Heart left ventricle (tissue), 16 donors: ENCODE measurements at regions of chr1 and their contacts with region 1.

Region 1: DNA sequence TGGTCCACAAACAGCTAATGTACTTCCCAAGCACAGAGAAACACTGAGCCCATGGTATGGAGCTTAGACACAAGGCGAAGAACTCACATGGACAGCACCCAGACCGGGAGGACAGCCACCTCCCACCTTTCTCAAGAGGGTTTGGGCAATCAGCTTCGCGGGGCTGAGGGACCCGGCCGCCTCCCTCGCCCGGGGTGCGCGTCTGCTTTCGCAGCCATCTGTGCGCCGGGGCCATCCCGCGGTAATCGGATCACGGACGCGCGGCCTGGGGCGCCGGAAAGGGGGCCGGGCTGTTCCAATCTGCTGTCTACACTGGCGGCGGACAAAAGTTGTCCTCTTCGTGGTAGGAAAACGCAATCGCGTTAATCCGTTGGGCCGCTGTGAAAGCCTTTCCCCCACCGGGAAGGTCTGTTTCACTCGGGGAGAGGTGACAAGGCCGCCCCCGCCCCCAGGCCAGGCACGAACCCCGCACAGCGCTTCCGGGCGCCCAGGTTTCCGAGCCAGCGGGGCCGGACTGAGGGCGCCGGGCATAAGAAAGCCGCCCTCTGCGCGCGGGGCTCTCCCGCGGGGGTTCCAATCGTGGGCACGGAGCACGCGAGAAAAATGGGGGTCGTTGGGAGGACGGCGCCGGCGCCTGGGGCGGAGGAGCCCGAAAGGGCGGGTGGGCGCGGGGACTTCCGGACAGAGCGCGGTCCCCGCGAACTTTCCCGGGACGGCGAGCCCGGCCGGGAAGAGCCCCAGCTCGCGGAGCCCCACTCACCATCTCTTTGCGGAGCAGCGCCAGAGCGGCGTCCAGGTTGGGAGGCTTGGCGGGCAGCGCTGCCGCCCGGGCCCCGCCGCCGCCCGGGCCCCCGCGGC is 664 bp downstream of the FAM89A start:
- DNase-seq: peak in 4 of 5 donors; percentile 13 to 70 (median 30)
- ATAC-seq: peak in 3 of 4 donors; percentile 37 to 58 (median 50)
- H3K4me3 ChIP-seq: peak overlapping the region; percentile 60 to 95 (median 76)
- H3K27ac ChIP-seq: peak overlapping the region; percentile 39 to 79 (median 71)
- H3K4me1 ChIP-seq: peaks cover 0 to 36% (median 14%) of the 10 kb centered on the region in 12 donors
- H3K27me3 ChIP-seq: peaks cover 0 to 27% (median 4%) of the 10 kb centered on the region in 9 donors
- CTCF ChIP-seq: no peak
- POLR2A ChIP-seq: no peak

Region 2: GRCh38 chr1:231091831-231092301 is 52.5 kb after region 1 on chr1:
- intact Hi-C with region 1: loop called in 1 of 10 experiments (anchors 5 kb)
- DNase-seq: no peak
- ATAC-seq: no peak
- H3K4me3 ChIP-seq: no peak overlapping the region
- H3K27ac ChIP-seq: no peak overlapping the region
- H3K4me1 ChIP-seq: peaks cover 0 to 12% (median 4%) of the 10 kb centered on the region in 12 donors
- H3K27me3 ChIP-seq: peaks cover 0 to 2% (median 0%) of the 10 kb centered on the region in 9 donors
- CTCF ChIP-seq: peak in 11 of 12 donors; percentile 9 to 53 (median 33)
- POLR2A ChIP-seq: no peak

Region 3: DNA sequence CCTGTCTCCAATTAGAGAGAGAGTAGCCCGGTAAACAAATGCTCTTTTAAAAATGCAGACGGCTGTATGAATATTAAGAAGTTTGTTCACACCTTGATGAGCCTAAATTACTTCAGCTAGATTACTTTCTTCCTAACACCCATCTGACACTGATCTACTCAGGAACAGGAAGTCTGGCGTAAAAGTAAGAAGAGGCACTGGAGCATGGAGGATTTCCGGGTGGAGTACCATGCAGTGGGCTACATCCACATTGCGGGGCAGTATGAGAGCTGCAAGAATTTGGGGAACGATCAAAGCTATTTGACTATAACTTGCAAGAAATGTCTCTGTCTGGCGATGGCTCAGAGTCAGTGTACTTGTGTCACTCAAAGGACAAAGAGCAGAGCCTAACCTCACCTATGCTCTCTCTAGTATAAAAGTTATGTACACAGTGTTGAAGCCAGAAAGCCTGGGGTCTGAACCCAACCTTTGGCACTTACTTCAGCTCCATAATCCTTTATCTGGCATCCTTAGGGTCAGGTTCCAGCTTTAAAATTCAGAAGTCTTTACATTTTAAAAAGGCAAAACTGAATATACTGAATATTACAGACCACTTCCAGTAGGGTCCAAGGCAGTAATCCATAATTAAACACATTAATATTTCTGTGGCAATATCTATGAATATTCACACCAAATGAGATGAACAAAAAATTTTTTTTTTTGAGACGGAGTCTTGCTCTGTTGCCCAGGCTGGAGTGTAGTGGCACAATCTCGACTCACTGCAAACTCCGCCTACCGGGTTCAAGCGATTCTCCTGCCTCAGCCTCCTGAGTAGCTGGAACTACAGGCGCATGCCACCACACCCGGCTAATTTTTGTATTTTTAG is 193.7 kb after region 1 on chr1:
- intact Hi-C with region 1: no loop called
- DNase-seq: no peak
- ATAC-seq: no peak
- H3K4me3 ChIP-seq: no peak overlapping the region
- H3K27ac ChIP-seq: no peak overlapping the region
- H3K4me1 ChIP-seq: peaks cover 0 to 14% (median 6%) of the 10 kb centered on the region in 12 donors
- H3K27me3 ChIP-seq: no peaks in the 10 kb centered on the region
- CTCF ChIP-seq: no peak
- POLR2A ChIP-seq: no peak